ENCODE measurements at regions of chr5 and their contacts with region 1.

Region 1: DNA sequence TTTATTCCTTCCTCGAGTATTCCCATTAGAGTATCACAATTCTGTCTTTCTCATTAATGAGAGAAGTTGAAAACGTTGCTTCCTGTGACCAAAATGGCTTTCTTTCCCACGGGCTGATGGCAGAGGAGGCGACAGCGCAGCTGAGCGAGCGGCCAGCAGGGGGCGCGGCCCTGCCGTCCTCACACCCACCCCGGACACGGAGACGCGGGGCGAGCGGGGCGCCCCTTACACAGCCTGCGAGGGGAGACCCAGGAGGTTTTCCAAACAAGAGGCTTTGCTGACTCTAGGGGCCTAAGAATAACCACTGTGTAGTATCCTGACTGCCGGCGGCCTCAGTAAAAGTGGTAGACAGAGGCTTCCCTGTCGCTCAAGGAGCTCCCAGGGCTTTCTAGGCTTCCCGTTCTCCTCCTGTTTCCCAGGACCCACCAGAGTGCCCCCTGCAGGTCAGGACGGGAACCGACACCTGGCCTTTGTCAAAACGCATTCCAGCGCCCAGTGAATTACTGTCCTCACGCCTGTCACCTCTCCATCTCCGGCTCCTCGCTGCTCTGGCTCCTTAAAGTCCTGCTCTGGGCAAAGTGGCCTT is 27.3 kb upstream of the FGF1 start:
- H3K4me3 ChIP-seq: peak overlapping the region; percentile 59
- H3K27ac ChIP-seq: peak overlapping the region; percentile 28; the same call in 1 of the 2 replicates
- H3K4me1 ChIP-seq: no peaks in the 10 kb centered on the region
- CTCF ChIP-seq: peak; percentile 97

Region 2: GRCh38 chr5:142611154-142611553 is 102.1 kb before region 1 on chr5:
- CTCF ChIA-PET with region 1: interaction called, 16 read pairs
- POLR2A ChIA-PET with region 1: no interaction called
- H3K4me3 ChIP-seq: no peak overlapping the region
- H3K27ac ChIP-seq: no peak overlapping the region
- H3K4me1 ChIP-seq: no peaks in the 10 kb centered on the region
- CTCF ChIP-seq: peak; percentile 80

Region 3: GRCh38 chr5:142692321-142692894 is 20.8 kb before region 1 on chr5:
- CTCF ChIA-PET with region 1: interaction called, 57 read pairs
- POLR2A ChIA-PET with region 1: no interaction called
- H3K4me3 ChIP-seq: no peak overlapping the region
- H3K27ac ChIP-seq: no peak overlapping the region
- H3K4me1 ChIP-seq: peaks cover under 1% of the 10 kb centered on the region; the same call in 1 of the 2 replicates
- CTCF ChIP-seq: no peak

Region 4: GRCh38 chr5:142748568-142749249 is 35.5 kb after region 1 on chr5:
- CTCF ChIA-PET with region 1: interaction called, 70 read pairs
- POLR2A ChIA-PET with region 1: no interaction called
- H3K4me3 ChIP-seq: no peak overlapping the region
- H3K27ac ChIP-seq: no peak overlapping the region
- H3K4me1 ChIP-seq: no peaks in the 10 kb centered on the region
- CTCF ChIP-seq: peak; percentile 63; the same call in 1 of the 2 replicates

Region 5: DNA sequence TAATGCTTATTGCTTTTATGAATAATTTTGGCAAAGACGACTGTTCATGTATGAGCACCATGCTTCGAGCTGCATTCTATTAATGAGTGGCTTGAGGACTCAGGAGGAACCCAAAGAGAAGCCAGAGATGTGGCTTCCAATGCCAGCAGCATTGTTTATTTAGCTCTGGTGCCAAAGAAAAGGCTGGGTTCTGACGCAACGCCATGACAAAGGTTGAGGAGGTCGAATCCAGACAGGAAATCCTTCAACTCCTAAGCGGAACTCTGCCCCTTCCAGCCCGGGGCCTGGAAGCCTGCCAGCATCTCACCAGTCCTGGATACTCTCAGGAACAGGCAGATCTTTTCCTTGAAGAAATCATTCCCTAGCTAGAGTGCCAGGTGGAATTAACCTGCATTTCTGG is 161.3 kb after region 1 on chr5:
- CTCF ChIA-PET with region 1: interaction called, 572 read pairs
- POLR2A ChIA-PET with region 1: no interaction called
- H3K4me3 ChIP-seq: no peak overlapping the region
- H3K27ac ChIP-seq: no peak overlapping the region
- H3K4me1 ChIP-seq: peaks cover 8% of the 10 kb centered on the region
- CTCF ChIP-seq: no peak

Region 6: DNA sequence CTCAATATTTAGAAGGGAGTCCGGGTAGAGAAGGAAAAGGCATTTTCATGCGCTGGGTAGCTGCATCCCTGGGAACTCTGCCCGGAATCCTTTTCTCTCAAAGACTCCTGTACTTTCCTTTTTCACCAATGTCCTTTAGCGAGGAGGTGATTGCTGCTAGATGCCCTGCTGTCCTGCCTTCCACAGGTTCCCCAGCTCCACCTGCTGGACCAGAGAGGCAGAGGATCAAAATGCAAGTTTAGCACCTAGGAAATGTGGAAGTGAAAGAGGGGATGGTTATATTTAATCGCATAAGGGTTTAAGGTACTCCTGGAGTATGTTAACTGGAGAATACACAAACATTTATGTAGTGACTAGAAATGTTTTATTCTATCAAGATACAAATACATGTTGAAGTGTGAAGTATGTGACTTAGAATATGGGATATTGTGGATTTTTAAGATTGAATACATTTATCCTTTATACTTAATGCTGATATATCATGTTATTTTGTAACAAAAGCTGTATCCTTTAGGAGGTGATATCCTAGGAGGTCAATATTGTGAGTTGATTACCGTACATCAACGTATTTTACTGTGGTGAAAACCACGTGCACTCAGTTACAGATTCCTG is 202.7 kb after region 1 on chr5:
- CTCF ChIA-PET with region 1: interaction called, 20 read pairs
- POLR2A ChIA-PET with region 1: no interaction called
- H3K4me3 ChIP-seq: no peak overlapping the region
- H3K27ac ChIP-seq: no peak overlapping the region
- H3K4me1 ChIP-seq: no peaks in the 10 kb centered on the region
- CTCF ChIP-seq: peak; percentile 57; the same call in 1 of the 2 replicates

Measured in HEK293 (cell line).